Dorsolateral prefrontal cortex (tissue), 120 donors: ENCODE measurements at regions of chr10 and their contacts with region 1.

Region 1: GRCh38 chr10:124632064-124632531 is 112.1 kb downstream of the FAM53B start:
- DNase-seq: peak in 2 of 10 donors; percentile 57 to 84
- H3K4me3 ChIP-seq: peak overlapping the region in 1 of 59 donors; percentile 29
- H3K27ac ChIP-seq: peak overlapping the region; percentile 12 to 98 (median 89)
- H3K27me3 ChIP-seq: no peaks in the 10 kb centered on the region
- CTCF ChIP-seq: peak in 54 of 56 donors; percentile 19 to 74 (median 53)

Region 2: DNA sequence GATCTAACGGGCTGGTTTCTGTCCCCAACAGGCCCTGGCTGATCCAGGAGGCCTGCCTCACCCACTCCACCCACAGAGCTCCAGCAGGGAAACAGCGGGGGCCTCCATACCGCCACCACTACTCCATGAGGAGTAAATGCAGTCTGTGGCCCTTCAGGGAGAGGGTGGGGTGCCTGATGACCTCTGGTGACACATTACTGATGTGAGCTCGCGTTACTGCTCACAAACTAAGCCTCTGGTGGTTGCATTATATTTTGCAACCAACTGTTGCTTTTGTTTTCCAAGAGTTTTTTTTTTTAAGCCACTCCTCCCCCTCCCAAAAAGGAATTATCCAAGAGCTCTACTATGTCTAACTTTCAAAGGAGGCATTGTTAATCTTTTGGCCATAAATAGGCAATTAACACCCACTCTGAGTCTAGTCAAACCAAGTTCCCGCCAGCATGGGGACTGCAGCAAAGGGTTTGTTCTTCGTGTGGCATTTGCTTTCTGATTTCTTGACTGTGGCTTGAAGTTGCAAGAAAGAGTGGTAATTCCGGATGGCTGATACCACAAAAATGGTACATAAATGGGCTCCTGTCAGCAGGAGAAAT is 39.5 kb after region 1 on chr10:
- intact Hi-C with region 1: no loop called
- DNase-seq: peak in 9 of 10 donors; percentile 66 to 93 (median 88)
- H3K4me3 ChIP-seq: peak overlapping the region in 10 of 59 donors; percentile 0 to 30 (median 6)
- H3K27ac ChIP-seq: peak overlapping the region; percentile 71 to 100 (median 98)
- H3K27me3 ChIP-seq: no peaks in the 10 kb centered on the region
- CTCF ChIP-seq: peak in 53 of 56 donors; percentile 10 to 72 (median 51)

Region 3: GRCh38 chr10:124802313-124802675 is 170.2 kb after region 1 on chr10:
- intact Hi-C with region 1: loop called in 1 of 2 experiments (anchors 10 kb)
- DNase-seq: no peak
- H3K4me3 ChIP-seq: peak overlapping the region; percentile 59 to 100 (median 96)
- H3K27ac ChIP-seq: peak overlapping the region in 47 of 59 donors; percentile 59 to 96 (median 86)
- H3K27me3 ChIP-seq: no peaks in the 10 kb centered on the region
- CTCF ChIP-seq: no peak